ENCODE measurements at regions of chrX and their contacts with region 1.

Region 1: GRCh38 chrX:151151665-151152267 is 24.6 kb upstream of the GPR50 start:
- DNase-seq: peak in 1 of 2 donors; percentile 78
- H3K4me3 ChIP-seq: no peak overlapping the region
- H3K27ac ChIP-seq: no peak overlapping the region
- H3K4me1 ChIP-seq: no peaks in the 10 kb centered on the region
- H3K27me3 ChIP-seq: peaks cover 0 to 10% (median 7%) of the 10 kb centered on the region in 3 donors
- CTCF ChIP-seq: peak in 5 of 7 experiments; percentile 23 to 67 (median 59)
- EP300 ChIP-seq: no peak
- POLR2A ChIP-seq: no peak

Region 2: GRCh38 chrX:151675121-151675746 is 523.5 kb after region 1 on chrX:
- intact Hi-C with region 1: loop called (anchors 5 kb)
- DNase-seq: no peak
- H3K4me3 ChIP-seq: no peak overlapping the region
- H3K27ac ChIP-seq: no peak overlapping the region
- H3K4me1 ChIP-seq: no peaks in the 10 kb centered on the region
- H3K27me3 ChIP-seq: no peaks in the 10 kb centered on the region
- CTCF ChIP-seq: no peak
- EP300 ChIP-seq: no peak
- POLR2A ChIP-seq: no peak